ENCODE measurements at regions of chr1 and their contacts with region 1.

Region 1: DNA sequence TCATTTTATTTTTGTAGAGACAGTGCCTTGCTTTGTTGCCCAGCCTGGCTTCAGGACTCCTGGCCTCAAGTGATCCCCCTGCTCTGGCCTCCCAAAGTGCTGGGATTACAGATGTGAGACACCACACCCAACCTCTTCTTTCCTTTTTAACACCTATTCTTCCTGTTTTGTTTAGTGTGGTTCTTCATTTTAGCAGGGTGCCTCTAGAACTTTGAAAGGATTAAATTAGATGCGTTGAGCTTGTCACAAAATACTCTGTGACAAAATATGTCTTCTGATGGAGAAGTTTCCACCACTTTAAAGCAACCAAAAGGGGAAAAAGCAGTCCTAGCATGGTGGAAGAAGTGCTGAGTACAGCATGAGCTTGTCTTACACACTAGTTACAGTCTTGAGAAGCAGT is 42.0 kb downstream of the CDC14A start:
- DNase-seq: peak; percentile 64
- H3K4me3 Mint-ChIP-seq: peak overlapping the region; percentile 44
- H3K27ac Mint-ChIP-seq: peak overlapping the region; percentile 84
- H3K4me1 Mint-ChIP-seq: peaks cover 75% of the 10 kb centered on the region
- H3K27me3 Mint-ChIP-seq: no peaks in the 10 kb centered on the region

Region 2: GRCh38 chr1:100433563-100433962 is 39.3 kb after region 1 on chr1:
- intact Hi-C with region 1: loop called (anchors 2 kb)
- DNase-seq: no peak
- H3K4me3 Mint-ChIP-seq: no peak overlapping the region
- H3K27ac Mint-ChIP-seq: no peak overlapping the region
- H3K4me1 Mint-ChIP-seq: peaks cover 38% of the 10 kb centered on the region
- H3K27me3 Mint-ChIP-seq: no peaks in the 10 kb centered on the region

Measured in activated CD4-positive, alpha-beta T cell treated with anti-CD3 and anti-CD28 coated beads, Interleukin-2, amount 10 ng/mL, durations not matched to agents 24 days and 14 days (primary cell).